Activated T-helper 2 cell treated with anti-CD3 and anti-CD28 coated beads, Interferon-gamma antibody, Interleukin-2, Interleukin-4, amounts not matched to agents 10 μg/mL and 5 μg/mL and 100 μg/mL, durations not matched to agents 14 hours and 24 hours and 36 hours (primary cell): ENCODE measurements at regions of chr9 and their contacts with region 1.

Region 1: DNA sequence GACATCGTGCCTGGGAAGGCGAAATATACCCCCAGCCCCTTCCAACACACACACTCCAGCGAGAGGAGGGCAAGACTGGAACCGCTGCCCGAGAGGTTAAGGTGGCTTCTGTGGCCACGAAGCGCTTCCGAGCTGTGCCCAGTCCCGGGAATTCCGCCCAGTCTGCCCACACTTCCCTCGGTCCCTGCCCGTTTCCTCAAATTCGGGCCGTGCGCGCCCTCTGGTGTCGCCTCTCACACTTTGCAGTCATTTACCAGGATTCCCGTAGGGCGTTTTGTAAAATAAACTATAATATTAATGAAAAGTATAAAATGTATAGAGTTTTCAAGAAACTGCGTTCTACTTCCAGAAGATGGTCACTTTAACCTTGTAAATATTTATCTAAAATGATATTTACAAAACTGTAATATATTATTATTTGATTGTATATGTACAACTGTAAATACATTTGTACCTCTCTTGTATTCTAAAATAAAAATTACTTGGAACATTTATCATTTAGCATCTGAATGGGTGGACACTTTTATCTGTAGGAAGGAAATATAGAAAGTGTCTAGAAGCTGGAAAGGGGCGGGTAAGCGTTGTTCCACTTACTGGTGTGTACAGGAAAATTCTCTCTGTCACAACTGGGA is 11.0 kb upstream of the EXOSC2 start:
- DNase-seq: peak; percentile 34
- H3K4me3 Mint-ChIP-seq: peak overlapping the region; percentile 86
- H3K27ac Mint-ChIP-seq: peak overlapping the region; percentile 77
- H3K4me1 Mint-ChIP-seq: peaks cover 6% of the 10 kb centered on the region
- H3K27me3 Mint-ChIP-seq: peaks cover 13% of the 10 kb centered on the region

Region 2: DNA sequence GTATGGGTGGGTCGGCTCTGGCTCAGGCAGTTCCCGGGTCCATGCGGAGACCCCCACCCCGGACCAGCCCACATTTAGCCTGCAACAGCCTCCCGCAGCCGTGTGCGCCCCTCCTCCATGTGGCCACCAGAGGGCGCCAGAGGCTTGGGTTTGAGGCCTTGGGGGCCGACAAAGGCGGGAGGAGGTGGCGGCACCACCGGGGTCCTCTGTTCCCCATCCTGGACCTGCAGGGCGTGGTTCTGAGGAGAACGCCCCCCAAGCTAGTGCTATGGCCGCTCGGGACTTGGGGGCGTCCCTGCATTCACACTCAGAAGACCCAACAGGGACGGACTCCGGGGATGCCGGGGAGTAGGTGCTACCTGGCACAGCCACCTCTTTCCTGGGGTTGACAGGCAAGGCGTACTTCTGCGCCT is 221.4 kb before region 1 on chr9:
- intact Hi-C with region 1: loop called (anchors 1 kb)
- DNase-seq: peak; percentile 40
- H3K4me3 Mint-ChIP-seq: no peak overlapping the region
- H3K27ac Mint-ChIP-seq: no peak overlapping the region
- H3K4me1 Mint-ChIP-seq: no peaks in the 10 kb centered on the region
- H3K27me3 Mint-ChIP-seq: peaks cover 6% of the 10 kb centered on the region

Region 3: DNA sequence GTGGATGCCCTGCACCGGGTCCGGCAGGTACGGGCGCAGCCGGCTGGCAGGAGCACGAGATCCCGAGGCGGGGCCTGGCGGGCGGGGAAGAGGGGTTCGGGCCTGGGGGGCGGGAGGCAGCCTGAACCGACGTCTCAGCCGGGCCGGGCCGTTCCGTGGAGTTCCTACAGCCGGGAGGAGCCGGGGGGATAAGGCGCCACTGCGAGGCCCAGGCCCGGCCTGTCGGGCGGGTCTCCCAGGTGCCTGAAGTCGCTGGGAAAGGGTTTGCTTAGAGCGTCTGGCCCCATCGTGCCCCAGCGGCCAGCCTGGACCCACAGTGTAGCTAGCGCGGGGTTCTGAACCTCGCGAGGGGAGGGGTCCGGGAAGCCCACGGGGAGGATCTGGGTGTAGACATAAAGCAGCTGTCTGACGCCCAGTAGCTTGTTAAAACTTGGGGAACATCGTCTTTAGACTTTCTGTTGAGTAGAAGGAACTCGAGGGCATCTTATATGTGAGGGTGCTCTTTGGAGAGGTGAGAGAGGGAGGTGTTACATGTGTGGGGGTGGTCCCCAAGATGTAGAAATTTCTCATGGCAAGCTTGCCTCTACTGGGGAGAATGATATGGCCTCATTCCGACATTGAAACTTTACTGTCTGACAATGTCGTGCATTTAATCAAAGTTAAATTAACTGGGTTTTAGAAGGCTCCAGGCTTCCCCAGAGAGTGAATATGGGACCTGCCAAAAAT is 102.7 kb before region 1 on chr9:
- intact Hi-C with region 1: loop called (anchors 10 kb)
- DNase-seq: no peak
- H3K4me3 Mint-ChIP-seq: peak overlapping the region; percentile 89
- H3K27ac Mint-ChIP-seq: peak overlapping the region; percentile 68
- H3K4me1 Mint-ChIP-seq: peaks cover 30% of the 10 kb centered on the region
- H3K27me3 Mint-ChIP-seq: peaks cover 6% of the 10 kb centered on the region

Region 4: DNA sequence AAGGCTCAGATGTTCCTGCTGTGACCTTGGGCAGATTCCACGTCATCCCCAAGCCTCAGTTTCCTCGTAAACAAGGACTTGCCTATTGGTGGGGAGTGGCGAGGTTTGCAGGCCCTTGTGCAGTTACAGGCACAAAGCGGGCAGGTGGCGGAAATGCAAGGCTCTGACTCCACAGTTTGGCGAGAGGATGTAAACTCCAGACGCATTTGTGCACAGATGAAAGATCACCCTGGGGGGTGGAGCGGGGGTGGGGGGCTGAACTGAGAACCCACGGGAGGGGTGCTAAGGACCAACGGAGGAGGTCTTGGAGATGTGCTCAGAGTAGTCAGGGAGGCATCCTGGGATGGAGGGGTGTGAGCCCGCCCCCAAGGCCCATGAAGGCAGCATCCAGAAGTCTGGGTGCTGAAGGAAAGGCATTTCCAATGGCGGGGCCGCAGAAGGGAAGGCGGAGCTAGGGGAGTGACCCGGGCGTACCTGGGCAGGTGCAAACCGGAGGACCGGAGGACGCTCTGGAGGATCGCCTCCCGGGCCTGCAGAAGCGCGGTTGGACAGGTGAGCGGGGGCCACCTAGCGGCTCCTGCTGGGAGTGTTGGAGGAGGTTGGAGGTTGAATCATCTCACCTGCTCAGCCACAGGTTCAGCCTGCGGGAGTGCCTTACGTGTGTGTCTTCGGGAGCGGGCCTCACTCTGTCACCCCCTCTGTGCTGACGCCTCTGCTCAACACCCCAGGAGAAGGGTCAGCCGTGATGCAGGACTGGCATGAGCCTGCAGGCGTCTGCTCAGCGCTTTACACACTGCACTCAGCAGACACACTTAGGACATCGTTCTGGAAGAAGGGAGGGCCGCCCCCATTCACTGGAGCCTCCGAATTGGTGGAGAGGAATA is 258.3 kb after region 1 on chr9:
- intact Hi-C with region 1: no loop called
- DNase-seq: peak; percentile 61
- H3K4me3 Mint-ChIP-seq: no peak overlapping the region
- H3K27ac Mint-ChIP-seq: no peak overlapping the region
- H3K4me1 Mint-ChIP-seq: peaks cover 1% of the 10 kb centered on the region
- H3K27me3 Mint-ChIP-seq: peaks cover 37% of the 10 kb centered on the region